CD8-positive, alpha-beta T cell (primary cell): ENCODE measurements at regions of chr19 and their contacts with region 1.

Region 1: GRCh38 chr19:48842789-48843162 is 6.5 kb upstream of the HSD17B14 start:
- DNase-seq: peak in 8 of 9 experiments; percentile 32 to 77 (median 56)
- ATAC-seq: peak; percentile 40
- H3K4me3 ChIP-seq: no peak overlapping the region
- H3K4me3 Mint-ChIP-seq: no peak overlapping the region
- H3K27ac ChIP-seq: no peak overlapping the region
- H3K27ac Mint-ChIP-seq: no peak overlapping the region
- H3K4me1 ChIP-seq: no peaks in the 10 kb centered on the region
- H3K4me1 Mint-ChIP-seq: peaks cover 3% of the 10 kb centered on the region
- H3K27me3 ChIP-seq: no peaks in the 10 kb centered on the region
- H3K27me3 Mint-ChIP-seq: no peaks in the 10 kb centered on the region
- CTCF ChIP-seq: peak; percentile 85

Region 2: DNA sequence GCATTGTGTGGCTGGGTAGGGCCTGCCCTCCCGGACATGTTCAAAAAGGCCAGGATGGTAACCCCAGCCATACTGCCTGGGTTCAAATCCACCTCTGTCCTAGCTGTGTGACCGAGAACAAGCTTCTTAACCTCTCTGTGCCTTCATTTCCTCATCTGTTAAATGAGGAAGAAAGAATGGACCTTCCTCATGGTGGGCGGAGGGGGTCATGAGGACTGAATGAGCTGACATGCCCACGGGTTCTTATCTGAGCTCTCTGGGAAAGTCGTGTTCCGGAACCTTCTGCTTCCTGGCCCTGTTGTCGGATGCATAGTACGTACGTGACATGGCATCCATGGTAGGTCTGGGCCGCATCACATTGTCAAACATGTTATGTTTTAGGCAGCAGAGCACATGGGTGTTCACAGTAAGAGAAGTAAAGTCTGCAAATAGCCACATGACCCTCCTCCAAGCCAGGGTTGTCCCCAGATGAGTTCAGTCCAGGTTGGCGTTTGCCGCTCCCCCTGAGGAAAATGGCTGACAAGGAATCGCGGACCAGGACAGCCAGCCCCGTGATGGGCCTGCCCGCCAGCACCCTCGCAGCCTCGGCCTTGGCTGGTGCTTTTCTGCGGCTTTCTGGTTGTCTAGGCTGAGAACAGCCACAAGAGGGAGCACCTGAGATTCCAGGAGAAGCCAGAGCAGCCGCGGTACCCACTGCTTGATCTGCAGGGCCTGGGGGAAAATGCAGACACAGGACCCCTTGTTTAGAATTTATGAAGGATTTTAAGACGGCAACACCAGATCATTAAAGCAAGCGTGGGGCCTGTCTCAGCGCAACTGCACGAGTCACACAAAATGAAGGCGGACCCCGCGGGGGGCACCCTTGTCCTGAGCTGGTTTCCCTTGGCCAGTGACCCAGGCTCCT is 167.6 kb before region 1 on chr19:
- CTCF ChIA-PET with region 1: interaction called, 10 read pairs
- POLR2A ChIA-PET with region 1: no interaction called
- intact Hi-C with region 1: loop called in 1 of 2 experiments (anchors 10 kb)
- DNase-seq: peak; percentile 56 to 88 (median 74)
- ATAC-seq: peak; percentile 98
- H3K4me3 ChIP-seq: no peak overlapping the region
- H3K4me3 Mint-ChIP-seq: no peak overlapping the region
- H3K27ac ChIP-seq: no peak overlapping the region
- H3K27ac Mint-ChIP-seq: peak overlapping the region; percentile 45
- H3K4me1 ChIP-seq: peaks cover 9% of the 10 kb centered on the region
- H3K4me1 Mint-ChIP-seq: peaks cover 6% of the 10 kb centered on the region
- H3K27me3 ChIP-seq: no peaks in the 10 kb centered on the region
- H3K27me3 Mint-ChIP-seq: no peaks in the 10 kb centered on the region
- CTCF ChIP-seq: peak; percentile 64

Region 3: DNA sequence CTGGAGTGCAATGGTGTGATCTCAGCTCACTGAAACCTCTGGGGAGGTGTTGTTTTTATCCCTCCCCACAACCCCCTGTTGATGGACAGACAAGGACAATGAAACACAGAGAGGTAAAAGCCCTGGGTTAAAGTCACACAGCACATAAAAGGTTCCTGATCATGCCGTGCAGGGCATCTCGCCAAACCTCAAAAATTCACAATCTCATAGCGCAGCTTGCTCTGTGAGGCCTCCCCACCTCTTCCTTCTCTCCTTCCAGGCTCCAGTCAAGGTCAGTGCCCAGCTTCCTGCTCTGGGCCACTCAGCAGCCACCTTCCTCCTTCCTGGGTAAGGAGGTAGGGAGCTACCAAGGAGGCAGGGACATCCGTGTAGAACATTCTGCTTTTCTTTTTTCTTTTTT is 144.7 kb before region 1 on chr19:
- CTCF ChIA-PET with region 1: no interaction called
- POLR2A ChIA-PET with region 1: no interaction called
- intact Hi-C with region 1: no loop called
- DNase-seq: no peak
- ATAC-seq: no peak
- H3K4me3 ChIP-seq: no peak overlapping the region
- H3K4me3 Mint-ChIP-seq: no peak overlapping the region
- H3K27ac ChIP-seq: no peak overlapping the region
- H3K27ac Mint-ChIP-seq: no peak overlapping the region
- H3K4me1 ChIP-seq: peaks cover 11% of the 10 kb centered on the region
- H3K4me1 Mint-ChIP-seq: peaks cover 12% of the 10 kb centered on the region
- H3K27me3 ChIP-seq: peaks cover 0 to 11% of the 10 kb centered on the region in 2 experiments
- H3K27me3 Mint-ChIP-seq: peaks cover 19% of the 10 kb centered on the region
- CTCF ChIP-seq: no peak

Region 4: DNA sequence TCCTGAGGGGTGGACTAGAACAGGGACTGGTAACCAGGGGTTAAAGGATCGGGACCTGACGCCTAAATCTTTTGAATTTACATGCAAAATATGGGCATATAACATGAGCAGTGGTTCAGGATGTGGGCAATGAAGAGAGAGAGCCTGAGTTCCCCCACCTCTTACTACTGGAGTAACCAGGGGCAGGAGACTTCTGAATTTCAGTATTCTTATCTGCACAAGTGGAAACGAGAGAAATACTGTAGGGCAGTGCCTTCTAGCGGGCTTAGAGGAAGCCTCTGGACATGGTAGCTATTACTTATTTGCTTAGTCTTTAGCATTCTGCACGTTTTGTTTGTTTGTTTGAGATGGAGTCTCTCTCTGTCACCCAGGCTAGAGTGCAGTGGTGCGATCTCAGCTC is 58.2 kb before region 1 on chr19:
- CTCF ChIA-PET with region 1: interaction called, 403 read pairs
- POLR2A ChIA-PET with region 1: interaction called, 5 read pairs
- intact Hi-C with region 1: loop called (anchors 1 kb)
- DNase-seq: no peak
- ATAC-seq: no peak
- H3K4me3 ChIP-seq: no peak overlapping the region
- H3K4me3 Mint-ChIP-seq: no peak overlapping the region
- H3K27ac ChIP-seq: no peak overlapping the region
- H3K27ac Mint-ChIP-seq: no peak overlapping the region
- H3K4me1 ChIP-seq: peaks cover 3% of the 10 kb centered on the region
- H3K4me1 Mint-ChIP-seq: peaks cover 6% of the 10 kb centered on the region
- H3K27me3 ChIP-seq: no peaks in the 10 kb centered on the region
- H3K27me3 Mint-ChIP-seq: peaks cover 12% of the 10 kb centered on the region
- CTCF ChIP-seq: no peak

Region 5: GRCh38 chr19:48826606-48827020 is 16.2 kb before region 1 on chr19:
- CTCF ChIA-PET with region 1: interaction called, 23 read pairs
- POLR2A ChIA-PET with region 1: interaction called, 4 read pairs
- intact Hi-C with region 1: no loop called
- DNase-seq: no peak
- ATAC-seq: no peak
- H3K4me3 ChIP-seq: no peak overlapping the region
- H3K4me3 Mint-ChIP-seq: no peak overlapping the region
- H3K27ac ChIP-seq: no peak overlapping the region
- H3K27ac Mint-ChIP-seq: no peak overlapping the region
- H3K4me1 ChIP-seq: no peaks in the 10 kb centered on the region
- H3K4me1 Mint-ChIP-seq: no peaks in the 10 kb centered on the region
- H3K27me3 ChIP-seq: no peaks in the 10 kb centered on the region
- H3K27me3 Mint-ChIP-seq: no peaks in the 10 kb centered on the region
- CTCF ChIP-seq: no peak

Region 6: GRCh38 chr19:48853483-48853882 is 10.7 kb after region 1 on chr19:
- CTCF ChIA-PET with region 1: interaction called, 11 read pairs
- POLR2A ChIA-PET with region 1: no interaction called
- intact Hi-C with region 1: no loop called
- DNase-seq: no peak
- ATAC-seq: no peak
- H3K4me3 ChIP-seq: no peak overlapping the region
- H3K4me3 Mint-ChIP-seq: no peak overlapping the region
- H3K27ac ChIP-seq: no peak overlapping the region
- H3K27ac Mint-ChIP-seq: no peak overlapping the region
- H3K4me1 ChIP-seq: no peaks in the 10 kb centered on the region
- H3K4me1 Mint-ChIP-seq: no peaks in the 10 kb centered on the region
- H3K27me3 ChIP-seq: no peaks in the 10 kb centered on the region
- H3K27me3 Mint-ChIP-seq: no peaks in the 10 kb centered on the region
- CTCF ChIP-seq: no peak

Region 7: DNA sequence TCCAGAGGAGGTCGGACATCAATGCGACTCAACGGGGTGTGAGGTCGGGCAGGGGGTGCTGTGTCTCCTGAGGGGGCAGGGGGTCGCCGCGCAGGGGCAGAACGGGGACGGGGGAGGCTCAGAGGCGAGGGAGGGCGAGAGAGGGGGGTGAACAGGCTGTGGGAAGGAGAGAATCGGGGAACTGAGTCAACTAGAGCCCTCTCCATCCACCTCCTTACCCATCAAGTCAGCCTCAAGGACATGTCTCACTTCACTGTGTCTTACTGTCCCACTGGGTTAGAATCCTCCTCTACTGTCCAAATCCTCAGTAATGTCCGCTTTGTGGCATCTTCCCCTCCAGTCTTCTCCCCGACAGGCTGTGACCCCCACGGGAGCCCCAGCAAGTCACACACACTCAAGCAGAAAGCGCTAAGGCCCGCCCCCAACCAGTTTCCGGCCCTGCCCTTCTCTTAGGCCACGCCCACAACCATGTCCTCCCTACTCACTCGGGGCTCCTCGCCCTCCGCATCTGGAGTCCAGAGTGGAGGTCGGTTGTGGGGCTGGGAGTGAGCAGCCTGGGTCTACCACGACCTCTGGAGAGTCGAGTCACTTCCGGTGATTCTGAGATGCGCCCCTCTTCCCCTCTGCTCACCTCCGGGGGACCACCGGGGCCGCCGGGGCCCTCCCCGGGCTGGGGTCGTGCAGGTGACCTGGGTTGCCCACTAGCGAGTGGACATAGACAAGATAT is 16.4 kb after region 1 on chr19:
- CTCF ChIA-PET with region 1: interaction called, 11 read pairs
- POLR2A ChIA-PET with region 1: no interaction called
- intact Hi-C with region 1: no loop called
- DNase-seq: peak in 8 of 9 experiments; percentile 74 to 84 (median 82)
- ATAC-seq: peak; percentile 76
- H3K4me3 ChIP-seq: peak overlapping the region; percentile 49 to 55
- H3K4me3 Mint-ChIP-seq: peak overlapping the region; percentile 88
- H3K27ac ChIP-seq: no peak overlapping the region
- H3K27ac Mint-ChIP-seq: peak overlapping the region; percentile 87
- H3K4me1 ChIP-seq: no peaks in the 10 kb centered on the region
- H3K4me1 Mint-ChIP-seq: peaks cover 3% of the 10 kb centered on the region
- H3K27me3 ChIP-seq: no peaks in the 10 kb centered on the region
- H3K27me3 Mint-ChIP-seq: no peaks in the 10 kb centered on the region
- CTCF ChIP-seq: no peak

Region 8: DNA sequence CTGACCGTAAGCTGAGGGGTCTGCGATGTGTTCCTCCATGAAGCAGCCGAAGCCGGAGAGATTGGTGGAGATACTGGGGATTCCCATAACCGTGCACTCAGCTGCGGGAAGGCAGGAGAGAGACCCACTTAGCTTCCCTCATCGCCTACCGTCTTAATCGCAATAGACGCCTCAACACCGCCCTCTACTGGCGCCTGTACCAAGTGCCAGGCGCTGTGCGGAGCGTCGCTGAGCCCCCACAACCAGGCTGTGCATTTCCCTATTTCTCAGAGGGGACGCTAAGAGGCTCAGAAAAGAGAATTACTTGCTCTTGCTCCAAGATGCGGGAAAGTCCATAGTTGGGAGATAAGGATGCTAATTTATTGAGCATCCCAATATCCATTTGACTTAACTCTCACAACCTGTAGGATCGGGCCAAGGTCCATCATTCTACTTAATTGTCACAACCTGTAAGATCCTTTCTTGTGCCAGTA is 128.2 kb after region 1 on chr19:
- CTCF ChIA-PET with region 1: interaction called, 61 read pairs
- POLR2A ChIA-PET with region 1: interaction called, 3 read pairs
- intact Hi-C with region 1: loop called in 1 of 2 experiments (anchors 2 kb)
- DNase-seq: peak; percentile 67 to 91 (median 86)
- ATAC-seq: peak; percentile 91
- H3K4me3 ChIP-seq: no peak overlapping the region
- H3K4me3 Mint-ChIP-seq: no peak overlapping the region
- H3K27ac ChIP-seq: no peak overlapping the region
- H3K27ac Mint-ChIP-seq: no peak overlapping the region
- H3K4me1 ChIP-seq: peaks cover 10% of the 10 kb centered on the region
- H3K4me1 Mint-ChIP-seq: peaks cover 19% of the 10 kb centered on the region
- H3K27me3 ChIP-seq: no peaks in the 10 kb centered on the region
- H3K27me3 Mint-ChIP-seq: no peaks in the 10 kb centered on the region
- CTCF ChIP-seq: peak; percentile 84